ENCODE measurements at regions of chr15 and their contacts with region 1.

Region 1: DNA sequence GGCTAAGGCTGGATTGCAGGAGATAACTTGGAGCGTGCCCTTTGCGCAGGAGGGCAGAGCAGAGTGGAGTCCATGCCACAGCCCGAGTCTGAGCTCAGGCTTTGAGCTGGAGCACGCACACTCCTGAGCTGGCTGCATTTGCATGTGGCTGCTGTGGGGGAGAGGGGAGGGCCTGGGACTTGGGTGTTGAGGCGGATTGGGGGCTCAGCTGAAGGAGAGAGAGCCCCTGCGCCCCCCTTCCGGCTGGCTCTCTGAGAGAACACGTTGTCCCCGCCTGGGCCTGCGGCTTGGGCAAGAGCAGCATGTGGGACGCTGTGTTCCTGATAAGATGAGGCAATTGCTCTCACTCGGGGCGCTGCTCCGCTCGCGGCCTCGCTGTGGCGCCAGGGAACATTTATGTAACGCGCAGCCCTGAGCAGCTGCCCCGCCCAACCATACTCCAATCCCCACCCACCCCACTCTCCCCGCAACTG is 39.1 kb downstream of the KLF13 start:
- DNase-seq: peak; percentile 71 to 84 (median 77)
- H3K4me3 ChIP-seq: peak overlapping the region in 1 of 2 donors; percentile 17
- H3K4me3 Mint-ChIP-seq: peak overlapping the region; percentile 79 to 91 (median 84)
- H3K27ac ChIP-seq: peak overlapping the region; percentile 82
- H3K27ac Mint-ChIP-seq: peak overlapping the region; percentile 91 to 98 (median 96)
- H3K4me1 ChIP-seq: peaks cover 99% of the 10 kb centered on the region
- H3K4me1 Mint-ChIP-seq: peaks cover 70 to 100% (median 92%) of the 10 kb centered on the region in 4 donors
- H3K27me3 ChIP-seq: no peaks in the 10 kb centered on the region
- H3K27me3 Mint-ChIP-seq: no peaks in the 10 kb centered on the region

Region 2: GRCh38 chr15:30991255-30992072 is 374.2 kb before region 1 on chr15 and contains the start of gene MTMR10:
- CTCF ChIA-PET with region 1: no interaction called
- POLR2A ChIA-PET with region 1: no interaction called
- intact Hi-C with region 1: loop called (anchors 5 kb)
- DNase-seq: peak; percentile 70 to 84 (median 82)
- H3K4me3 ChIP-seq: peak within 1 kb of the TSS; percentile 64 to 76
- H3K4me3 Mint-ChIP-seq: peak within 1 kb of the TSS; percentile 94 to 98 (median 96)
- H3K27ac ChIP-seq: peak within 1 kb of the TSS; percentile 76
- H3K27ac Mint-ChIP-seq: peak within 1 kb of the TSS; percentile 89 to 95 (median 94)
- H3K4me1 ChIP-seq: peaks cover 30% of the 10 kb centered on the region
- H3K4me1 Mint-ChIP-seq: peaks cover 19 to 32% (median 27%) of the 10 kb centered on the region in 4 donors
- H3K27me3 ChIP-seq: no peaks in the 10 kb centered on the region
- H3K27me3 Mint-ChIP-seq: no peaks in the 10 kb centered on the region
- total RNA-seq, gene MTMR10: 29.6 to 31.8 TPM

Region 3: GRCh38 chr15:31215490-31216214 is 150.0 kb before region 1 on chr15:
- CTCF ChIA-PET with region 1: interaction called, 28 read pairs
- POLR2A ChIA-PET with region 1: interaction called, 19 read pairs
- intact Hi-C with region 1: loop called (anchors 5 kb)
- DNase-seq: peak; percentile 70 to 76 (median 72)
- H3K4me3 ChIP-seq: peak overlapping the region in 1 of 2 donors; percentile 38
- H3K4me3 Mint-ChIP-seq: peak overlapping the region; percentile 54 to 76 (median 73)
- H3K27ac ChIP-seq: peak overlapping the region; percentile 52
- H3K27ac Mint-ChIP-seq: peak overlapping the region in 6 of 7 donors; percentile 32 to 87 (median 78)
- H3K4me1 ChIP-seq: peaks cover 30% of the 10 kb centered on the region
- H3K4me1 Mint-ChIP-seq: peaks cover 18 to 34% (median 28%) of the 10 kb centered on the region in 4 donors
- H3K27me3 ChIP-seq: no peaks in the 10 kb centered on the region
- H3K27me3 Mint-ChIP-seq: no peaks in the 10 kb centered on the region

Region 4: GRCh38 chr15:31344823-31345605 is 20.7 kb before region 1 on chr15:
- CTCF ChIA-PET with region 1: interaction called, 48 read pairs
- POLR2A ChIA-PET with region 1: interaction called, 562 read pairs
- intact Hi-C with region 1: loop called (anchors 1 kb)
- DNase-seq: peak in 1 of 5 donors; percentile 47
- H3K4me3 ChIP-seq: peak overlapping the region; percentile 54 to 60
- H3K4me3 Mint-ChIP-seq: peak overlapping the region; percentile 83 to 95 (median 90)
- H3K27ac ChIP-seq: peak overlapping the region; percentile 74
- H3K27ac Mint-ChIP-seq: peak overlapping the region; percentile 84 to 99 (median 98)
- H3K4me1 ChIP-seq: peaks cover 100% of the 10 kb centered on the region
- H3K4me1 Mint-ChIP-seq: peaks cover 70 to 100% (median 91%) of the 10 kb centered on the region in 4 donors
- H3K27me3 ChIP-seq: no peaks in the 10 kb centered on the region
- H3K27me3 Mint-ChIP-seq: no peaks in the 10 kb centered on the region

Region 5: GRCh38 chr15:31377030-31377429 is 11.3 kb after region 1 on chr15:
- CTCF ChIA-PET with region 1: interaction called, 35 read pairs
- POLR2A ChIA-PET with region 1: interaction called, 30 read pairs
- intact Hi-C with region 1: loop called (anchors 1 kb)
- DNase-seq: no peak
- H3K4me3 ChIP-seq: no peak overlapping the region
- H3K4me3 Mint-ChIP-seq: no peak overlapping the region
- H3K27ac ChIP-seq: no peak overlapping the region
- H3K27ac Mint-ChIP-seq: peak overlapping the region in 3 of 7 donors; percentile 35 to 75 (median 66)
- H3K4me1 ChIP-seq: peaks cover 35% of the 10 kb centered on the region
- H3K4me1 Mint-ChIP-seq: peaks cover 18 to 67% (median 40%) of the 10 kb centered on the region in 4 donors
- H3K27me3 ChIP-seq: no peaks in the 10 kb centered on the region
- H3K27me3 Mint-ChIP-seq: no peaks in the 10 kb centered on the region

Region 6: GRCh38 chr15:31391687-31392671 is 26.3 kb after region 1 on chr15:
- CTCF ChIA-PET with region 1: interaction called, 14 read pairs
- POLR2A ChIA-PET with region 1: interaction called, 66 read pairs
- intact Hi-C with region 1: loop called (anchors 1 kb)
- DNase-seq: peak; percentile 78 to 87 (median 79)
- H3K4me3 ChIP-seq: peak overlapping the region; percentile 65 to 77
- H3K4me3 Mint-ChIP-seq: peak overlapping the region; percentile 87 to 96 (median 92)
- H3K27ac ChIP-seq: peak overlapping the region; percentile 57
- H3K27ac Mint-ChIP-seq: peak overlapping the region; percentile 81 to 98 (median 93)
- H3K4me1 ChIP-seq: peaks cover 28% of the 10 kb centered on the region
- H3K4me1 Mint-ChIP-seq: peaks cover 28 to 60% (median 39%) of the 10 kb centered on the region in 4 donors
- H3K27me3 ChIP-seq: no peaks in the 10 kb centered on the region
- H3K27me3 Mint-ChIP-seq: no peaks in the 10 kb centered on the region

Region 7: GRCh38 chr15:31472636-31473384 is 107.1 kb after region 1 on chr15:
- CTCF ChIA-PET with region 1: interaction called, 36 read pairs
- POLR2A ChIA-PET with region 1: interaction called, 25 read pairs
- intact Hi-C with region 1: no loop called
- DNase-seq: peak; percentile 56 to 69 (median 62)
- H3K4me3 ChIP-seq: peak overlapping the region; percentile 12 to 41
- H3K4me3 Mint-ChIP-seq: peak overlapping the region; percentile 60 to 89 (median 79)
- H3K27ac ChIP-seq: peak overlapping the region; percentile 51
- H3K27ac Mint-ChIP-seq: peak overlapping the region; percentile 80 to 96 (median 94)
- H3K4me1 ChIP-seq: peaks cover 42% of the 10 kb centered on the region
- H3K4me1 Mint-ChIP-seq: peaks cover 31 to 57% (median 47%) of the 10 kb centered on the region in 4 donors
- H3K27me3 ChIP-seq: no peaks in the 10 kb centered on the region
- H3K27me3 Mint-ChIP-seq: no peaks in the 10 kb centered on the region

Region 8: GRCh38 chr15:31934821-31935220 is 569.1 kb after region 1 on chr15:
- CTCF ChIA-PET with region 1: no interaction called
- POLR2A ChIA-PET with region 1: no interaction called
- intact Hi-C with region 1: no loop called
- DNase-seq: no peak
- H3K4me3 ChIP-seq: no peak overlapping the region
- H3K4me3 Mint-ChIP-seq: no peak overlapping the region
- H3K27ac ChIP-seq: no peak overlapping the region
- H3K27ac Mint-ChIP-seq: no peak overlapping the region
- H3K4me1 ChIP-seq: no peaks in the 10 kb centered on the region
- H3K4me1 Mint-ChIP-seq: no peaks in the 10 kb centered on the region
- H3K27me3 ChIP-seq: no peaks in the 10 kb centered on the region
- H3K27me3 Mint-ChIP-seq: peaks cover 10 to 20% of the 10 kb centered on the region in 2 donors

Measured in CD4-positive, alpha-beta memory T cell (primary cell).